H1 (cell line): ENCODE measurements at regions of chr7 and their contacts with region 1.

Region 1: DNA sequence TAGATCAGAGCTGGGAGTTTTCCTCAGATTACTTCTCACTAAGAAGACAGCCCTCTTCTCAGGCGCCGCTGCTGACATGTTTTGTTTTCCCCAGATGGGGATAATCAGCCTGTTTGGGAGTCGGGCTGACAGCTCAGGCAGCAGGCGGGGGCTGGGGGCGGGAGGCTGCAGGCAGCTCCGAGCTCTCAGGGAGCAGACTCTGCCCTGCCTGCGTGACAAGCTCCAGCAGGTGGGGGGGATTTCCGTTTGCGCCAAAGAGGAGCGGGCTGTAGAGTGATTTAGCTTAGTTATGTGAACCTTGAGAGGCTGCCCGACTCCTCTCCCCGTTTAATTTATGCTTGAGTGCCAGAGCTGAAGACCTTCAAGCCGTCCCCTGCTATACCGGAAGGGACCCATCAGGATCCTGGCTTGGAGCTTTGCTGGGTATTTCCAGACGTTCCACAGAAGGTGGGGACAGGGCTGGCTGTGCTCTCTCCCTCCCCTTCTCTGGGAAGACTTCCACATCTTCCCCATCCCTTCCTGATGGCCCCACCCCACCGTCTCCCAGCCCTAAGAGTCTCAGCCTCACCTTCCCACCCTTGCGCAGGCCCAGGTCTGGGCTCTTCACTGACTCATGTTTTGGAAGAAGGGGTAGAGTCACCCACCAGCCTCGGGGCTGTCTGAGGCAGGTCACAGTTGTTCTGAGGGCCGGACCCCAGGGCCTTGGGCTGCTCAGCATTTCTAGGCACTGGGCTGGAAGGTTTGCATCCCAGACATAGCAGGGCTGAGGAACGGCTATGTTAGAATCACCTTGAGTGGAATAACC is 24.7 kb upstream of the ADCYAP1R1 start:
- DNase-seq: peak in 1 of 2 experiments; percentile 55
- H3K4me3 ChIP-seq: no peak overlapping the region
- H3K27ac ChIP-seq: no peak overlapping the region
- H3K4me1 ChIP-seq: peaks cover 3 to 14% (median 10%) of the 10 kb centered on the region in 4 experiments
- H3K27me3 ChIP-seq: no peaks in the 10 kb centered on the region
- CTCF ChIP-seq: no peak
- EP300 ChIP-seq: no peak
- POLR2A ChIP-seq: no peak
- RAD21 ChIP-seq: no peak

Region 2: GRCh38 chr7:30771174-30771879 is 256.0 kb before region 1 on chr7 and contains the start of gene MINDY4:
- CTCF ChIA-PET with region 1: no interaction called
- POLR2A ChIA-PET with region 1: no interaction called
- DNase-seq: peak; percentile 36 to 86
- H3K4me3 ChIP-seq: peak within 1 kb of the TSS; percentile 50 to 93 (median 74)
- H3K27ac ChIP-seq: no peak within 1 kb of the TSS
- H3K4me1 ChIP-seq: peaks cover 0 to 2% (median under 1%) of the 10 kb centered on the region in 4 experiments; a peak in 5 of 7 replicates
- H3K27me3 ChIP-seq: no peaks in the 10 kb centered on the region
- CTCF ChIP-seq: no peak
- EP300 ChIP-seq: no peak
- POLR2A ChIP-seq: peak in 1 of 2 experiments; percentile 72; a peak in 2 of 3 replicates
- RAD21 ChIP-seq: no peak
- total RNA-seq, gene MINDY4: 3.6 and 3.8 TPM in 2 replicates

Region 3: DNA sequence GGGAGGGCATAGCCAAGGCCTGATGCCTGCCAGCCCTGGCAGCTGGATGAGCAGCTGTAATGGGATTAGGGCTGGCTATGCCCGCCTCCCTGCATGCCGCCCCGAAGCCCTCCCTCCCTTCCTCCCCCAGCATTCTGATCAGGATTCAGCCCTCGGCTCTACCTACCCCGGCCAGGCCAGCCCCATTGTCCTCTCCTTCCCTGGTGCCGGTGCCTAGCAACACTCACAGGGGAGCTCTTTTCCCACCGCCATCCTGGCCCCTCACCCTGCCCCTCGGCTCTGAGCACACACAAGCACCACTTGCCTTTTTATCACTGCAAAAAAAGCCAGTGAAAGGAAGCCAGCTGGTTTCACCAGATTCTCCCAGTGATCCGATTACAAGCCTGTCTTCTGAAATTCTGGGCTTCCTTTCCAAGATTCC is 15.7 kb after region 1 on chr7:
- CTCF ChIA-PET with region 1: interaction called, 880 read pairs
- POLR2A ChIA-PET with region 1: interaction called, 4 read pairs
- DNase-seq: peak in 1 of 2 experiments; percentile 67
- H3K4me3 ChIP-seq: peak overlapping the region in 1 of 4 experiments; percentile 20; a peak in 1 of 8 replicates
- H3K27ac ChIP-seq: no peak overlapping the region
- H3K4me1 ChIP-seq: peaks cover 2 to 12% (median 8%) of the 10 kb centered on the region in 4 experiments
- H3K27me3 ChIP-seq: peaks cover 0 to 7% (median 1%) of the 10 kb centered on the region in 4 experiments; a peak in 1 of 7 replicates
- CTCF ChIP-seq: no peak
- EP300 ChIP-seq: no peak
- POLR2A ChIP-seq: no peak
- RAD21 ChIP-seq: 0 out of 4 replicates have a peak, but pooled peaks of 1 of the 2 experiments have one; percentile 0

Region 4: DNA sequence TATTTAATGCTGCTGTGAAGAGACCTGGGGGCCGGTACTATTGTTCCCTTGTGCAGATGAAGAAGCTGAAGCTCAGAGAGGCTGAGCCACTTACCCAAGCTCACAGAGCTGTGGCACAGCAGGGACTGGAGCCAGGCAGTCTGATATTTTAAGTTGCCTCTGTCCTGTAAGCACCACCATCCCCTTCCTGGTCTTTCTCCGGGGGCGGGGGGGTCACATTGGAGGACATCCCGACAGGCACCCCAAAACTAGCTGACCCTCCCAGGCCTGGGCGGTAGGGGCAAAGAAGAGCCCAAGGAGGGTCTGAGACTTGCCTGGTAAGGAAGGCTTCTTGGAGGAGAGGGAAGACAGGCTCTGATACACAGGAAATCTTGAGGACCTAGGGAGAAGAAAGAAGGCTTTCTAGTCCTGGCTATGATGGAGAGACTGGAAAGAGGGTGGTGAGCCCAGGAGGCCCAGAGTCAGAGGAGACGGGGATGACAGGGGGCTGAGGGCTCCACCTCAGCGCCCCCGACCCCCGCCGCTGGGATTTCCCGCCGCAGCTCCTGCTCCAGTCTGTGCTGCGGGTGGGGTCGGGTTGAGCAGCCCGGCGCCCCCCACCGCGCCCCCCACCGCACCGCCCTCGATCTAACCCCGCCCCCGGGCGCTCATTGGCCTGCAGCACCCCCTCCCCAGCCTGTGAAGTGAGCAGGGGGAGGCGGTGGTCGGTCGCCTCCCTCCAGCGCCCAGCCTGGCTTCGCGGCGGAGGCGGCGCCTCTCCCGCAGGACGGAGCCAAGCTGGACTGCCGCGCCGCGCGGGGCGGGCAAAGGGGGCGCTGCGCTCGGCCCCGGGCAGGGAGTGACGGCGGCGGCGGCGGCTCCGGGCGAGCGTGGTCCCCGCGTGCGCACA is 24.5 kb after region 1 on chr7 and contains the start of gene ADCYAP1R1:
- CTCF ChIA-PET with region 1: interaction called, 880 read pairs
- POLR2A ChIA-PET with region 1: interaction called, 3 read pairs
- DNase-seq: peak in 1 of 2 experiments; percentile 77
- H3K4me3 ChIP-seq: peak within 1 kb of the TSS; percentile 63 to 85 (median 66)
- H3K27ac ChIP-seq: no peak within 1 kb of the TSS
- H3K4me1 ChIP-seq: peaks cover 1 to 17% (median 8%) of the 10 kb centered on the region in 4 experiments
- H3K27me3 ChIP-seq: peaks cover 3 to 37% (median 25%) of the 10 kb centered on the region in 4 experiments
- CTCF ChIP-seq: peak in 2 of 3 experiments; percentile 25 to 26; a peak in 2 of 4 replicates
- EP300 ChIP-seq: no peak
- POLR2A ChIP-seq: no peak
- RAD21 ChIP-seq: no peak; a peak in 1 of 4 replicates
- total RNA-seq, gene ADCYAP1R1: 13.7 and 14.6 TPM in 2 replicates